PC-3 (cell line): ENCODE measurements at regions of chr10 and their contacts with region 1.

Region 1: DNA sequence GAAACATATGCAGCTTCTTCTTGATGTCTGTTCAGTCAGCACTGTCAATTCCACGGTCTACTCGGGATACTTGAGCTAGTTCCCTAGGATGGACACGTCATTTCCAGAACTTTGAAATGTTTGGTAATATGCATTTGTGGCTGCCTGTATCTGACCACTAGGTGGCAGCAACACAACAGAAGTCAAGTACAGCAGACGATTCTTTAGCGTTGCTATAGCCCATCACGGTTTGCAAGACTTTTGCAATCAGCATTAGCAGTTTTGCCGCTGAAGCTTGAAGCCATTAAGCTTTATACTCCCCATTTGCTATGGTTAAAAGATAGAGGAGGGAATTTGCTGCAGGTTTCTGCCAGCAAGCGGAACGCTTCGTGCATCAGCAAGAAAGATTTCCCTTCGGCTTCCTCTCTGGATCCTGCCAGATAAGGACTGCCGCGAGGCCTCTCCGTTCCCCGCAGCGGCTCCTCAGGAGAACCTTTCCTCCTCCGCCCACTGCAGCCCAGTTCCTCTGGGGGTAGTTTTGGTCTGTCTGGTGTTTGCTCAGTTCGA is 63.5 kb downstream of the ABCC2 start:
- DNase-seq: peak; percentile 90
- ATAC-seq: peak; percentile 94
- H3K4me3 ChIP-seq: peak overlapping the region; percentile 50
- H3K27ac ChIP-seq: no peak overlapping the region
- H3K4me1 ChIP-seq: peaks cover 3% of the 10 kb centered on the region; the same call in 1 of the 2 replicates
- H3K27me3 ChIP-seq: no peaks in the 10 kb centered on the region
- CTCF ChIP-seq: peak; percentile 89

Region 2: GRCh38 chr10:99232360-99232999 is 613.4 kb before region 1 on chr10:
- CTCF ChIA-PET with region 1: no interaction called
- POLR2A ChIA-PET with region 1: no interaction called
- intact Hi-C with region 1: no loop called
- DNase-seq: no peak
- ATAC-seq: no peak
- H3K4me3 ChIP-seq: no peak overlapping the region
- H3K27ac ChIP-seq: no peak overlapping the region
- H3K4me1 ChIP-seq: no peaks in the 10 kb centered on the region
- H3K27me3 ChIP-seq: peaks cover 83% of the 10 kb centered on the region
- CTCF ChIP-seq: no peak

Region 3: DNA sequence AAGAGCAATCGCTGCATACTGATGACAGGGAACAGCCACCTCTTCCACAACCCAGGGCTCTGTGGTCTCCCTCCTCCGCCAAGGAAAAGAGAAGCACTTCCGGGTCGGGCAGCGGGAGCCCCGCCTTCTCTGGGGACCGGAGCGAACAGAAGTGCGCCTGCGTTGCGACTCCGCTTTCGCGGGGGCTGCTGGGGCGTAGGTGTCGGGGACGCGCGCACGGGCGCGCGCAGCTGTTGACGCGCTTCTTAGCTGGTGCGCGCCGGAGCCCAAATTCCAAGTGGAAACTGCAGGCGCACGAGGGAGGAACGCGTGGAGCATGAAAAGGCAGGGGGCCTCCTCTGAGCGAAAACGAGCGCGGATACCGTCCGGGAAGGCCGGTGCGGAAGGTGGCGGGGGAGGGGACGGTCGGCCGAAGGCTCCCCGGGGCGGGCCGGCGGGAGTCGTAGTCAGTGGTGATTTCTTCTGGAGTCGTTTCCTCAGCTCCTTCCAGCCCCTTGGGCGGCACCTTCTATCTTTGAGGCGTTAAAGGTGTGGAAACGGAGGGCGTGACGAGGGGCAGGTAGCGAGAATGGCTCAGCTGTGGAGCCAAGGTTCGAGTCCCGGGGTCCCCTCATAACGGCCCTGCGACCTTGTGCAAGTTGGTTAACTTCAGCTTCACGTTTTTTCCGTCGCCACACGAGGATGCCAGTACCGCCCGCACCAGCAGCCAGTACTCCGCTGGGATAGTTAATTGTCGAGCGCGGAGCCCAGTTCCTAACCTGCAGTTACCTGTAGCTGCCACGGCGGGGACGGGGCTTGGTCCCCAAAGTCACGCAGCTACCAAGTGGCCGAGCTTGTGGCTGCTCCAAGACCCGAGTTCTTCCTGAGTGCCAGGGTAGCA is 113.6 kb before region 1 on chr10 and contains the starts of genes COX15 and CUTC:
- CTCF ChIA-PET with region 1: interaction called, 13 read pairs
- POLR2A ChIA-PET with region 1: interaction called, 6 read pairs
- intact Hi-C with region 1: loop called (anchors 1 kb)
- DNase-seq: peak; percentile 95
- ATAC-seq: peak; percentile 88
- H3K4me3 ChIP-seq: peak within 1 kb of the TSS; percentile 95
- H3K27ac ChIP-seq: peak within 1 kb of the TSS; percentile 89
- H3K4me1 ChIP-seq: peaks cover 3% of the 10 kb centered on the region; the same call in 1 of the 2 replicates
- H3K27me3 ChIP-seq: no peaks in the 10 kb centered on the region
- CTCF ChIP-seq: no peak; the same call in 1 of the 2 replicates
- total RNA-seq, gene COX15: 16.6 and 24.6 TPM in 2 replicates
- total RNA-seq, gene CUTC: 10.2 and 14.5 TPM in 2 replicates

Region 4: GRCh38 chr10:99966306-99966705 is 120.4 kb after region 1 on chr10:
- CTCF ChIA-PET with region 1: interaction called, 9 read pairs
- POLR2A ChIA-PET with region 1: no interaction called
- intact Hi-C with region 1: loop called (anchors 1 kb)
- DNase-seq: peak; percentile 95
- ATAC-seq: peak; percentile 91
- H3K4me3 ChIP-seq: no peak overlapping the region
- H3K27ac ChIP-seq: peak overlapping the region; percentile 93
- H3K4me1 ChIP-seq: peaks cover 28% of the 10 kb centered on the region
- H3K27me3 ChIP-seq: no peaks in the 10 kb centered on the region
- CTCF ChIP-seq: no peak

Region 5: GRCh38 chr10:100046021-100046486 is 200.1 kb after region 1 on chr10:
- CTCF ChIA-PET with region 1: interaction called, 30 read pairs
- POLR2A ChIA-PET with region 1: no interaction called
- intact Hi-C with region 1: loop called (anchors 1 kb)
- DNase-seq: peak; percentile 81
- ATAC-seq: peak; percentile 92
- H3K4me3 ChIP-seq: no peak overlapping the region
- H3K27ac ChIP-seq: no peak overlapping the region
- H3K4me1 ChIP-seq: 0 out of 2 replicates have a peak, but pooled peaks cover 7% of the 10 kb centered on the region
- H3K27me3 ChIP-seq: no peaks in the 10 kb centered on the region
- CTCF ChIP-seq: peak; percentile 81

Region 6: DNA sequence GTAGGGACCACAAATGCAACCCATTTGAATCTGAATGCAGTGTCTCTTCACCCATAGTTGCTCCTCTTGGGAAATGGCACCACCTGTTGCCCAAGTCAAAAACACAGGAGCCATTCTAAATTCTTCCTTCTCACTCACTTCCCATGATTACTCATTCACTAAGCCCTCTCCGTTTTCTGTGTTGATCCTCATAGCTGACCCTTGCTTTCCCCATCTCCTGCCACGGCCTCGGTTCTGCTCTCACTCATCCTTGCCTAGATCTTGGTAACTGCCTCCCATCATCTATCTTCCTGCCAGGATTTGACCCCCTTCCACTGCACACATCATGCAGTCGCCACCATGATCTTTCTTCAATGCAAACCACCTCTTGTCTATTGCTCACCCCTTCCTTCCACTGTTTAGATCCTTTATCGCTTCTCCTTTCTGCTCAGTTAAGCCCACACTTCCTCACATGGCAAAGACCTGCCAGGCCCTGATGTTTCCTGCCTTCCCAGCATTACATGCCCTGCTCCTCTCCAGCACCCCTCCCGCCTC is 254.8 kb after region 1 on chr10:
- CTCF ChIA-PET with region 1: no interaction called
- POLR2A ChIA-PET with region 1: no interaction called
- intact Hi-C with region 1: loop called (anchors 1 kb)
- DNase-seq: peak; percentile 55
- ATAC-seq: peak; percentile 65; the same call in 1 of the 2 replicates
- H3K4me3 ChIP-seq: no peak overlapping the region
- H3K27ac ChIP-seq: no peak overlapping the region
- H3K4me1 ChIP-seq: peaks cover 11% of the 10 kb centered on the region
- H3K27me3 ChIP-seq: no peaks in the 10 kb centered on the region
- CTCF ChIP-seq: peak; percentile 57